B cell (primary cell): ENCODE measurements at regions of chr1 and their contacts with region 1.

Region 1: DNA sequence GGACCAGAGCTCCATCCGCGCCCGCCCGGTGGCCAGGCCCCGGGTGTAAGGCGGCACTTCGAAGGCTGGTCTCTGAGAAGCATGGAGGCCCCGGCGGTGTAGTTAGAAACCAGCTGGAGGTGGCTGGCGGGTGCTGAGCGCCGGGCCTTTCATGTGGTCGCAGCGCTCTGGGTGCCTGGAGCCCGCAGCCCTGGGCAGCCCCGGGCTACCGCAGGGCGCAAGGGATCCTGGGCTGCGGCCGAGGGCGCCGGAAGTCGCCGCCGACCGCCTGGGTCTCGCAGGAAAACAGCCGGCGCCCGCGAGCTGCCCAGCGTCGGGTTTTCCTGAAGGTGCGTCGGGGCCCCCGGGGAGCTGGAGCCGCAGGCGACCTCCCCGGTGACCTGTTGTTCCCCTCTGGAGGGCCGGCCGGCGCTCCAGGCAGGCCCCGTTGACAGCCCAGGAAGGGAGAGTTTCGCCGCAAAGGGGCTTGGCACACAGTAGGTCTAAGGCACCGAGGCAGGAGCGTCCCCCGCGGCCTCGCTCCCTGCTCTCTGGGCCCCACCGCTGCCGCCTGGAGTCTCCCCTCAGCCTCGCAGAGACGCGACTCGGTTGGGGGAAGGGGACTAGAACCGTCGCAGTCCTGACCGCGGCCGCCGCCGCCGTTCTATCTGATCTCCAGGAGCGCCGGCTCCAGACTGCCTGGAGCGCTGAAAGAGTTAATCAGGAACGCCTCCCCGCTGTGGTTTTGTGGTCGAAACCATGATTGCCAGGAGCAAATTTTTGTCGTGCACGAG is 2.7 kb downstream of the GRHL3 start:
- DNase-seq: peak; percentile 70
- ATAC-seq: peak; percentile 72
- H3K4me3 ChIP-seq: peak overlapping the region; percentile 46 to 63 (median 59)
- H3K4me3 Mint-ChIP-seq: peak overlapping the region; percentile 87
- H3K27ac ChIP-seq: peak overlapping the region in 1 of 2 donors; percentile 25
- H3K27ac Mint-ChIP-seq: peak overlapping the region; percentile 23
- H3K4me1 ChIP-seq: peaks cover 35 to 37% of the 10 kb centered on the region in 2 donors
- H3K4me1 Mint-ChIP-seq: peaks cover 42% of the 10 kb centered on the region
- H3K27me3 ChIP-seq: peaks cover 0 to 75% (median 45%) of the 10 kb centered on the region in 4 experiments
- H3K27me3 Mint-ChIP-seq: peaks cover 65% of the 10 kb centered on the region
- CTCF ChIP-seq: no peak

Region 2: GRCh38 chr1:24374891-24375786 is 53.3 kb after region 1 on chr1:
- CTCF ChIA-PET with region 1: no interaction called
- POLR2A ChIA-PET with region 1: no interaction called
- intact Hi-C with region 1: loop called (anchors 10 kb)
- DNase-seq: no peak
- ATAC-seq: no peak
- H3K4me3 ChIP-seq: no peak overlapping the region
- H3K4me3 Mint-ChIP-seq: no peak overlapping the region
- H3K27ac ChIP-seq: peak overlapping the region in 1 of 2 donors; percentile 24
- H3K27ac Mint-ChIP-seq: peak overlapping the region; percentile 68
- H3K4me1 ChIP-seq: peaks cover 21 to 24% of the 10 kb centered on the region in 2 donors
- H3K4me1 Mint-ChIP-seq: peaks cover 21% of the 10 kb centered on the region
- H3K27me3 ChIP-seq: no peaks in the 10 kb centered on the region
- H3K27me3 Mint-ChIP-seq: no peaks in the 10 kb centered on the region
- CTCF ChIP-seq: no peak